ENCODE measurements at regions of chr9 and their contacts with region 1.

Region 1: GRCh38 chr9:76704593-76705204 is 59.5 kb upstream of the PCA3 start:
- DNase-seq: no peak
- H3K4me3 ChIP-seq: no peak overlapping the region
- H3K27ac ChIP-seq: no peak overlapping the region
- H3K4me1 ChIP-seq: no peaks in the 10 kb centered on the region
- H3K27me3 ChIP-seq: no peaks in the 10 kb centered on the region
- CTCF ChIP-seq: peak; percentile 51 to 79 (median 70)
- POLR2A ChIP-seq: no peak

Region 2: DNA sequence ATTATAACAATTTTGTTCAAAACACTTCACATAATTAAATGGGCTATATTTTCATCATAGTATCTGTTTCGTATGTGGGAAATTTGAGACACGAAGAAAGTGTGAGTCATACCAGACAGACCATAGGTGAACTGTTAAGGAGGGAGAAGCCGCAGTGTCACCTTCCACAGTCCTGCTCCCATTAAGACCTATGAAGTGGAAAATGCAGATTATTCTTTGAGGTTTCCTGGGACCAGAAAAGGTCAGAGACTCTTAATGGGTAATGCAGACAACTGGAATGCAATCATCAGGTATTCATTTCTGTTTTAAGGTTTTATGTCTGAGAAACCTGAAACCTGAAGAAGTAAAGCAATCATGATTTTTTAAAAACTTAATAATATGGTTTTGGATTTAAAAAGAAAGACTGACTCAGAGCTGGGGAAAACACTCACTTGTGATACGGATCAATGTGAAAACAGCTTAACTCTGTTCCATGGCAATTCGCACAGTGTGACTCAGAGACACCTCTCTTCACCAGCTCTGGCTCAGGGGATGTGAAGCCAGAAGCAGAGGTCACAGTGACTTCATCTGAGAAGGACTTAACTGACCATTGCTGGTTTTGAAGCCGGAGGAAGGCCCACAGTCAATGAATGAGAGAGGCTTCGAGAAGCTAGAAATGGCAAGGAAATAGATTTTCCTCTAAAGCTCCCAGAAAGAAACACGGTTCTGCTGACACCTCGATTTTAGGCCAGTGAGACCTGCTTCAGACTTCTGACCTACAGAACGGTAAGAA is 263.0 kb before region 1 on chr9:
- intact Hi-C with region 1: loop called (anchors 10 kb)
- DNase-seq: no peak
- H3K4me3 ChIP-seq: no peak overlapping the region
- H3K27ac ChIP-seq: no peak overlapping the region
- H3K4me1 ChIP-seq: no peaks in the 10 kb centered on the region
- H3K27me3 ChIP-seq: no peaks in the 10 kb centered on the region
- CTCF ChIP-seq: no peak
- POLR2A ChIP-seq: no peak

Region 3: GRCh38 chr9:76610011-76610352 is 94.7 kb before region 1 on chr9:
- intact Hi-C with region 1: no loop called
- DNase-seq: peak; percentile 27 to 34
- H3K4me3 ChIP-seq: no peak overlapping the region
- H3K27ac ChIP-seq: no peak overlapping the region
- H3K4me1 ChIP-seq: no peaks in the 10 kb centered on the region
- H3K27me3 ChIP-seq: no peaks in the 10 kb centered on the region
- CTCF ChIP-seq: no peak
- POLR2A ChIP-seq: no peak

Region 4: GRCh38 chr9:76787677-76788076 is 83.0 kb after region 1 on chr9:
- intact Hi-C with region 1: no loop called
- DNase-seq: no peak
- H3K4me3 ChIP-seq: no peak overlapping the region
- H3K27ac ChIP-seq: no peak overlapping the region
- H3K4me1 ChIP-seq: no peaks in the 10 kb centered on the region
- H3K27me3 ChIP-seq: no peaks in the 10 kb centered on the region
- CTCF ChIP-seq: no peak
- POLR2A ChIP-seq: no peak

Measured in uterus (tissue), 4 donors.